Posterior vena cava (tissue), 2 donors: ENCODE measurements at regions of chr14 and their contacts with region 1.

Region 1: GRCh38 chr14:61525293-61526011 is 169.9 kb upstream of the HIF1A start:
- DNase-seq: peak; percentile 88

Region 2: DNA sequence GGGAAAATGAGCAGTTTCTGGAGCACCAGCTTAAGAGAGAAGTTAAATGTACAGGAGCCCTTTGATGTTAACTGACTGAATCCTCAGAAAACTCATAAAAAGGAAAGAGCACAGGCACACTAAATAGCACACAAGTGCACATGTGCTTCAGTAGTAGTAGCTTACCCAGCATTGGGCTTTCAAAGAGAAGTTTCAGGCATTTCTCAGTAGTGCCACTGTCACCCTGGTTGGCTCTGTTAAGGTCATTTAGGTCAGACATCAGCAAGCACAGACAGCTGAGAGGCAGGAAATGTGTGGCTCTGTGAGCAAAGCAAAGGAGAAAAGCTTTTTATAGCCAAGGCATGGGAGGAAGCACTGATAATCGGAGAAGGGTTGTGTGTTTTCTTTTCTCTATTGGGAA is 73.5 kb after region 1 on chr14:
- intact Hi-C with region 1: loop called in 1 of 2 experiments (anchors 10 kb)
- DNase-seq: no peak